Activated CD4-positive, alpha-beta T cell treated with anti-CD3 and anti-CD28 coated beads for 36 hours (primary cell): ENCODE measurements at regions of chr2 and their contacts with region 1.

Region 1: GRCh38 chr2:165874445-165875039 is 79.0 kb downstream of the TTC21B start:
- DNase-seq: no peak
- ATAC-seq: peak; percentile 52
- H3K4me3 Mint-ChIP-seq: no peak overlapping the region
- H3K27ac Mint-ChIP-seq: no peak overlapping the region
- H3K4me1 Mint-ChIP-seq: peaks cover 36% of the 10 kb centered on the region
- H3K27me3 Mint-ChIP-seq: no peaks in the 10 kb centered on the region

Region 2: GRCh38 chr2:165239230-165239629 is 635.3 kb before region 1 on chr2 and contains the start of gene SCN2A:
- CTCF ChIA-PET with region 1: interaction called, 5 read pairs
- POLR2A ChIA-PET with region 1: no interaction called
- intact Hi-C with region 1: loop called in 1 of 2 experiments (anchors 10 kb)
- DNase-seq: no peak
- ATAC-seq: no peak
- H3K4me3 Mint-ChIP-seq: no peak within 1 kb of the TSS
- H3K27ac Mint-ChIP-seq: no peak within 1 kb of the TSS
- H3K4me1 Mint-ChIP-seq: no peaks in the 10 kb centered on the region
- H3K27me3 Mint-ChIP-seq: no peaks in the 10 kb centered on the region
- total RNA-seq, gene SCN2A: 0.07 to 0.14 TPM

Region 3: GRCh38 chr2:165667375-165667774 is 207.2 kb before region 1 on chr2:
- CTCF ChIA-PET with region 1: no interaction called
- POLR2A ChIA-PET with region 1: no interaction called
- intact Hi-C with region 1: no loop called
- DNase-seq: no peak
- ATAC-seq: no peak
- H3K4me3 Mint-ChIP-seq: no peak overlapping the region
- H3K27ac Mint-ChIP-seq: no peak overlapping the region
- H3K4me1 Mint-ChIP-seq: no peaks in the 10 kb centered on the region
- H3K27me3 Mint-ChIP-seq: peaks cover 2% of the 10 kb centered on the region

Region 4: DNA sequence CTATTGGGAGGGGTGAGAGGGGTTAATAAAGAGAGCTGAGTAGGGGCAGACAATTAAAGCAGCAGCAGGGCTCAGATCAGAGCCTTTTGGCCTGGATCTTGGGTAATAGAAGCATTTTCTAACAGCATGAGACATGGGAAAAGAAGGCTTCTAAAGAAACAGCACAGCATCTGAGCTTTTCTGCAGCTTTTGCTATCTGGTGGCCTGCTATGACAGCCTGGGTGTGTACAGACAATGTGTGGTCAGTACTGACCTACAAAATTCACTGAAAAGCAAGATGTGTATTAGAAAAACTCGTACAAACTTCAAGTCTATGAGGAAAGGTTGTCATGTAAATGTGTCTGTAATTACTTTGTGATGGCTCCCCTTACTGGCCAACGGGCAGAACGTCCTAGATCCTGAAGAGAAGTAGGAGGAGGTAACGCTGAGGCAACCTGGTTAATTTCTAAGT is 176.1 kb before region 1 on chr2:
- CTCF ChIA-PET with region 1: interaction called, 3 read pairs
- POLR2A ChIA-PET with region 1: no interaction called
- intact Hi-C with region 1: loop called in 1 of 2 experiments (anchors 5 kb)
- DNase-seq: peak; percentile 10
- ATAC-seq: peak; percentile 57
- H3K4me3 Mint-ChIP-seq: no peak overlapping the region
- H3K27ac Mint-ChIP-seq: no peak overlapping the region
- H3K4me1 Mint-ChIP-seq: no peaks in the 10 kb centered on the region
- H3K27me3 Mint-ChIP-seq: peaks cover 2% of the 10 kb centered on the region

Region 5: GRCh38 chr2:165794536-165794928 is 80.0 kb before region 1 on chr2:
- CTCF ChIA-PET with region 1: interaction called, 6 read pairs
- POLR2A ChIA-PET with region 1: no interaction called
- intact Hi-C with region 1: loop called (anchors 1 to 2 kb)
- DNase-seq: peak; percentile 80
- ATAC-seq: peak; percentile 98
- H3K4me3 Mint-ChIP-seq: peak overlapping the region; percentile 83
- H3K27ac Mint-ChIP-seq: peak overlapping the region; percentile 91
- H3K4me1 Mint-ChIP-seq: peaks cover 15% of the 10 kb centered on the region
- H3K27me3 Mint-ChIP-seq: peaks cover 28% of the 10 kb centered on the region

Region 6: GRCh38 chr2:166765141-166765540 is 890.6 kb after region 1 on chr2:
- CTCF ChIA-PET with region 1: no interaction called
- POLR2A ChIA-PET with region 1: no interaction called
- intact Hi-C with region 1: no loop called
- DNase-seq: no peak
- ATAC-seq: no peak
- H3K4me3 Mint-ChIP-seq: no peak overlapping the region
- H3K27ac Mint-ChIP-seq: no peak overlapping the region
- H3K4me1 Mint-ChIP-seq: no peaks in the 10 kb centered on the region
- H3K27me3 Mint-ChIP-seq: no peaks in the 10 kb centered on the region